Activated naive CD4-positive, alpha-beta T cell treated with anti-CD3 and anti-CD28 coated beads for 36 hours (primary cell): ENCODE measurements at regions of chr1 and their contacts with region 1.

Region 1: GRCh38 chr1:154955718-154956543 is at the start of gene PBXIP1:
- DNase-seq: peak; percentile 88
- H3K4me3 Mint-ChIP-seq: peak within 1 kb of the TSS; percentile 91
- H3K27ac Mint-ChIP-seq: peak within 1 kb of the TSS; percentile 96
- H3K4me1 Mint-ChIP-seq: peaks cover 74% of the 10 kb centered on the region
- H3K27me3 Mint-ChIP-seq: no peaks in the 10 kb centered on the region
- total RNA-seq, gene PBXIP1: 55.3 to 55.5 TPM

Region 2: DNA sequence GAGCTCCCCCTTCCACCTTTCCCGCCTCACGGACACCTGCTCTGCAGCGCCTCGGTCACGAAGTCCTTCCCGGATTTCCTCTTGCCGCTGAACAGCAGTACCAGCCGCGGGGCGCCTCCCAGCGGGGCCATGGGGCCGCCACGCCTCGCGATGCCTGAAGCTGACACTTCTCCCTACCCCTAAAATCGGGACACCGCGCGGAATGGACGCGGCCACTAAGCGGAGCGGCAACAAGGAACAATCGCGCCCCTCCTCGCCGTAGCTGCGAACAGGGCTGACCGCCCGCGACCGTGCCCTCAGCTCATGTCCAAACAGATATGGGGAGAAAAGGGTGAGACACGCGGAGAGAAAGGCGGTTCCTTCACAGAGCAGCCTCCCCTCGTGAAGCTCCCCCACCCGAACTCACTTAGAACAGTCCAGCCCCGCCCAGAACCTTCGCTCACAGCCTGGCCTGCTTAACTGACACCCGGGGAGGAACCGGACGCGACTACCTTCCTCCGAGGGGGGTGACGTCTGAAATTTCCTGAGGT is 19.3 kb before region 1 on chr1 and contains the start of gene PMVK:
- CTCF ChIA-PET with region 1: interaction called, 5 read pairs
- intact Hi-C with region 1: loop called (anchors 1 kb)
- DNase-seq: peak; percentile 97
- H3K4me3 Mint-ChIP-seq: peak within 1 kb of the TSS; percentile 83
- H3K27ac Mint-ChIP-seq: peak within 1 kb of the TSS; percentile 97
- H3K4me1 Mint-ChIP-seq: peaks cover 47% of the 10 kb centered on the region
- H3K27me3 Mint-ChIP-seq: no peaks in the 10 kb centered on the region
- total RNA-seq, gene PMVK: 29.8 to 30.5 TPM

Region 3: GRCh38 chr1:154982897-154983648 is 27.1 kb after region 1 on chr1 and contains the start of gene FLAD1:
- CTCF ChIA-PET with region 1: interaction called, 4 read pairs
- intact Hi-C with region 1: loop called (anchors 1 kb)
- DNase-seq: peak; percentile 99
- H3K4me3 Mint-ChIP-seq: no peak within 1 kb of the TSS
- H3K27ac Mint-ChIP-seq: no peak within 1 kb of the TSS
- H3K4me1 Mint-ChIP-seq: peaks cover 30% of the 10 kb centered on the region
- H3K27me3 Mint-ChIP-seq: no peaks in the 10 kb centered on the region
- total RNA-seq, gene FLAD1: 27.2 to 30.0 TPM

Region 4: DNA sequence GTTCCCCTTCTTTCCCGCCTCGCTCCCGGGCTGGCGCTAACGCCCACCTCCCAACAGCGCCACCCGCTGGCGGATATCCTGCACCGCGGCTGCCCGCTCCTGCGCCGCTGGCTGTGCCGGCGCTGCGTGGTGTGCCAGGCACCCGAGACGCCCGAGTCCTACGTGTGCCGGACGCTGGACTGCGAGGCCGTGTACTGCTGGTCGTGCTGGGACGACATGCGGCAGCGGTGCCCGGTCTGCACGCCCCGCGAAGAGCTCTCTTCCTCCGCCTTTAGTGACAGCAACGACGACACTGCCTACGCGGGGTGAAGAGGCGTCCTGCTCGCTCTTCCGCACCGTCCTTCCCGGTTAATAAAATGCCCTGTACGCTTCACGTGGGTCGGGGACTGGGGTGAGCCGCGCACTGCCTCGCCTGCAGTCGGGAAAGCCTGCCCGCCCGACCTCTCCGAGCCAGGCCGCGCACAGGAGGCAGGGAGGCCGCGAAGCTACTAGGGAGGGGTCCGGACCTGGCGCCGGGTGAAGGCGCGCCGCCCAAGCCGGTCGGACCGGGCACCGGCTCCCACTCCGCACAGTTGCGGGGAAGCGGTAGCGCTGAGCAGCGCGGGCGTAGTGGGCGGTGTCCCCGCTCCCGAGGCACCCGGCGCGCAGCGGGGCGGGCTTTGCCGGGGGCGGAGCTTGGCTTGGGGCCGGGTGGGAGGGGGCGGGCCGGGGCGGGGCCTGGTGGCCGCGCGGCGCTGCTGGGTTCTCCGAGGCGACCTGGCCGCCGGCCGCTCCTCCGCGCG is 94.8 kb after region 1 on chr1 and contains the start of gene ADAM15:
- CTCF ChIA-PET with region 1: interaction called, 4 read pairs
- intact Hi-C with region 1: loop called (anchors 1 kb)
- DNase-seq: peak; percentile 85
- H3K4me3 Mint-ChIP-seq: peak within 1 kb of the TSS; percentile 84
- H3K27ac Mint-ChIP-seq: no peak within 1 kb of the TSS
- H3K4me1 Mint-ChIP-seq: peaks cover 24% of the 10 kb centered on the region
- H3K27me3 Mint-ChIP-seq: no peaks in the 10 kb centered on the region
- total RNA-seq, gene ADAM15: 53.8 to 55.8 TPM